ENCODE measurements at regions of chr13 and their contacts with region 1.

Region 1: DNA sequence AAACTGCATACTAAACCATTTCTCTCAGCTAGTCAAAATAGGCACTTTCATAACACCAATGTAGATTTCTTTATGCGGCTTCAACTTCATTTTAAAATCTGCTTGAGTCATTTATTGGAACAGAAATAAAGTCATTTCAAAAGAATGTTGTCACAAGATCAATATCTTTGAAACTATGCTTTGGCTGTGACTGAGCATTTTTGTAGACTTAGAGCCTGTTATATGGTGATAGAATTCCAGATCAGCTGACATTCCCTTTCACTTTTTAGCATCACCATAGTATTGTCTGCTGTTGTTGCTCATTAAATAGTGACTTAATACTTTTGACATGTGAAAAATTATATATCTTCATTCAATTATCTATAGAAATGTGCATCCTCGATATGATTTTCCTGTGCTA is 279.2 kb upstream of the PRR20A start:
- DNase-seq: peak; percentile 91
- H3K4me3 ChIP-seq: no peak overlapping the region
- H3K27ac ChIP-seq: peak overlapping the region; percentile 78
- H3K4me1 ChIP-seq: peaks cover 48% of the 10 kb centered on the region
- H3K27me3 ChIP-seq: no peaks in the 10 kb centered on the region
- CTCF ChIP-seq: no peak
- POLR2A ChIP-seq: no peak

Region 2: GRCh38 chr13:56718791-56719190 is 142.7 kb before region 1 on chr13:
- CTCF ChIA-PET with region 1: no interaction called
- POLR2A ChIA-PET with region 1: no interaction called
- dilution Hi-C with region 1: no loop called
- intact Hi-C with region 1: loop called (anchors 1 kb)
- DNase-seq: peak; percentile 82
- H3K4me3 ChIP-seq: no peak overlapping the region
- H3K27ac ChIP-seq: peak overlapping the region; percentile 58
- H3K4me1 ChIP-seq: peaks cover 16% of the 10 kb centered on the region
- H3K27me3 ChIP-seq: no peaks in the 10 kb centered on the region
- CTCF ChIP-seq: no peak
- POLR2A ChIP-seq: no peak

Measured in endothelial cell of umbilical vein (primary cell).